ENCODE measurements at regions of chr20 and their contacts with region 1.

Region 1: DNA sequence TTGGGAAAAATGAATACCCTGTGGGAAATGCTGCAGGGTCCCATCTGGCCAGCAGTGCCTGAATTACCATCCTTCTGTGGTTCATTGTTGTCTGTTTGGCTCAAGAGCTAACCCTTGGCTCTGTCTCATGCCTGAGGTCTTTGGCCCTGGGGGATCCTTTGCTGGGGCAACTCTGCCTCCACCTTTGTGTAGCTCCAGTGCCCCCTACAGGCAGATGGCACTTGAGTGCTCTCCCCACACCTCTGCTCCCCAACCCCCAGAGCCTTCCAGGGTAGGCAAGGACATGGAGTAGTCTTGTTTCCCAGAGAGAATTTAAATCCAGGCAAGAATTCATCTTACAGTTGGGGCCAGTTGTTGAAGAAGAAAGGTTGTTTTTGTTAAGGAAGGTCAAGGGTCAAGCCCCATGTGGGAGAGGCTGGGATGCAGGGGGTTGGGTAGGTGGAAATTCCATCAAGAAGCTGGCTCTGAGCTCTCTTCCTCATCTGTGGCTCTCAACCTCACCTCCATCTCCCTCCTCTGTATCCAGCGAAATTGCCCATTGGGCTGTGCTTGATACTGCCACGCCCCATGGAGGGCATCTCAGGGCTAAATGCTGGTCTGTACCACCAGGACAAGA is 44.2 kb downstream of the ZNF831 start:
- DNase-seq: peak; percentile 88
- H3K4me3 Mint-ChIP-seq: no peak overlapping the region
- H3K27ac Mint-ChIP-seq: peak overlapping the region; percentile 46
- H3K4me1 Mint-ChIP-seq: peaks cover 23% of the 10 kb centered on the region
- H3K27me3 Mint-ChIP-seq: no peaks in the 10 kb centered on the region

Region 2: DNA sequence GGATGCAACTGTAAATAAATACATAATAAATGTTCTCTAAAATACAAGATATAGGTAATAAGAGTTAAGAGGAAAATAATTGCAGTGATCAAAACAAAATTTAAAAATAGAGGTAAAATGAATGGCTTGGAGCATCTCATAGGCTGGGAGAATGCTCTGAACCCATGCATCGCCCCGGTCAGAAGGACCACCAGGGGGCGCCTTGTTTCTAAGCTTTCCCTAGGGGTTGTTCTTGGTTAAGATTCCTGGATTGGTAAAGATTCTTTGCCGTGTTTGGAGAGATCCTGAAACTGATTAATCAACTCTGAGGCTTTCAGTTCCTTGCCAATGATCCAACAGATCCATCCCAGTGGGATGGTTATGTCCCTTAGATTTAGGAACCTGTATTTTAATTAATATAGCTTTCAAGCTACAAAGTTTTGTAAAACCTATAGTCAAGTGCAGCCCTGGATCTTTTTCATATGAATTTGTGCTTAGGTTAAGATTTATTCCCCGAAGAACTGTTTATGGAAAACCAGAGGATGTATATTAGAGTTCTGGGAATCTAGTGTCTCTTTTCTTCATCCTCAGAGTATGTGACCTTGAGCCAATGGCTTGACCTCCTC is 119.9 kb before region 1 on chr20:
- CTCF ChIA-PET with region 1: interaction called, 168 read pairs
- DNase-seq: peak; percentile 88
- H3K4me3 Mint-ChIP-seq: no peak overlapping the region
- H3K27ac Mint-ChIP-seq: no peak overlapping the region
- H3K4me1 Mint-ChIP-seq: peaks cover 4% of the 10 kb centered on the region
- H3K27me3 Mint-ChIP-seq: peaks cover 32% of the 10 kb centered on the region

Region 3: GRCh38 chr20:59122062-59122919 is 85.6 kb before region 1 on chr20:
- CTCF ChIA-PET with region 1: interaction called, 29 read pairs
- DNase-seq: peak; percentile 30
- H3K4me3 Mint-ChIP-seq: peak overlapping the region; percentile 60
- H3K27ac Mint-ChIP-seq: peak overlapping the region; percentile 96
- H3K4me1 Mint-ChIP-seq: peaks cover 66% of the 10 kb centered on the region
- H3K27me3 Mint-ChIP-seq: peaks cover 7% of the 10 kb centered on the region

Region 4: GRCh38 chr20:59222253-59223181 is 14.7 kb after region 1 on chr20:
- CTCF ChIA-PET with region 1: interaction called, 30 read pairs
- DNase-seq: peak; percentile 85
- H3K4me3 Mint-ChIP-seq: peak overlapping the region; percentile 69
- H3K27ac Mint-ChIP-seq: peak overlapping the region; percentile 78
- H3K4me1 Mint-ChIP-seq: peaks cover 20% of the 10 kb centered on the region
- H3K27me3 Mint-ChIP-seq: peaks cover 4% of the 10 kb centered on the region

Measured in activated naive CD4-positive, alpha-beta T cell treated with anti-CD3 and anti-CD28 coated beads, Interleukin-2, amount 10 ng/mL, durations not matched to agents 7 days and 5 days (primary cell).